ENCODE measurements at regions of chr13 and their contacts with region 1.

Region 1: GRCh38 chr13:80454245-80454644 is 113.3 kb upstream of the SPRY2 start:
- DNase-seq: no peak
- H3K27ac ChIP-seq: no peak overlapping the region
- CTCF ChIP-seq: no peak

Region 2: GRCh38 chr13:78638216-78638615 is 1816.0 kb before region 1 on chr13:
- CTCF ChIA-PET with region 1: interaction called, 10 read pairs
- POLR2A ChIA-PET with region 1: no interaction called
- DNase-seq: no peak
- H3K27ac ChIP-seq: no peak overlapping the region
- CTCF ChIP-seq: no peak

Region 3: DNA sequence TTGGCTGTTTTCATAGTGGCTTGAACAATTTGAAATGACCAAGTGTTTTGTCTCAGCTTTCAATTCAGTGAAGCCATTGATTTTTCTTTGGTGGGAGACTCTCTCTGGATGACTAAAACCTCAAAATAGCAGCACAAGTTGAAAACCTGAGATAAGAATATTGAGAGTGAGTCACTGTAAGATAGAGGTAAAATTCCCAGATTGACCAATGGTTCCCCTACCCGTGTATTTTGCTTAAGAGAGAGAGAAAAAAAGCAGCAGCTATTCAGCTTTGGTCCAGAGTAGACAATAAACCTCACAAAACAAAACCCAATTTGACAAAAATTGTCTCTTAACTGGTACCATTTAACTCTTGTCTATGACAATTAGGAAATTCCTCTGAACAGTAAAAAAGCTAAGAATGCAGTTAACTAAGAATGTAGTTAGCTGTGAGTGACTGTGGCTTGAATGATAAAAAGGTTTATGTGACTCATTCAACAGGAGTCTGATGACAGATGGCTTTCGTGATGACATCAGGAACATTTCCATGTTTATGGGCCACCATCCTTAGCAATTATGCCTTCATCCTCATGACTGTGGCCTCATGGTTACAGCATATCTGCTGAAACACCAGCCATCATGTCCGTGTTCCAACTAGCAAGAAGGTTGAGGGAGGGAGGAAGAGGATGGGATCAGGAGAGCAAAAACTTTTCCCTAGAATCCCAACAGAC is 616.3 kb before region 1 on chr13:
- CTCF ChIA-PET with region 1: no interaction called
- POLR2A ChIA-PET with region 1: no interaction called
- DNase-seq: no peak
- H3K27ac ChIP-seq: no peak overlapping the region
- CTCF ChIP-seq: no peak

Measured in RWPE1 (cell line).